ENCODE measurements at regions of chr3 and their contacts with region 1.

Region 1: DNA sequence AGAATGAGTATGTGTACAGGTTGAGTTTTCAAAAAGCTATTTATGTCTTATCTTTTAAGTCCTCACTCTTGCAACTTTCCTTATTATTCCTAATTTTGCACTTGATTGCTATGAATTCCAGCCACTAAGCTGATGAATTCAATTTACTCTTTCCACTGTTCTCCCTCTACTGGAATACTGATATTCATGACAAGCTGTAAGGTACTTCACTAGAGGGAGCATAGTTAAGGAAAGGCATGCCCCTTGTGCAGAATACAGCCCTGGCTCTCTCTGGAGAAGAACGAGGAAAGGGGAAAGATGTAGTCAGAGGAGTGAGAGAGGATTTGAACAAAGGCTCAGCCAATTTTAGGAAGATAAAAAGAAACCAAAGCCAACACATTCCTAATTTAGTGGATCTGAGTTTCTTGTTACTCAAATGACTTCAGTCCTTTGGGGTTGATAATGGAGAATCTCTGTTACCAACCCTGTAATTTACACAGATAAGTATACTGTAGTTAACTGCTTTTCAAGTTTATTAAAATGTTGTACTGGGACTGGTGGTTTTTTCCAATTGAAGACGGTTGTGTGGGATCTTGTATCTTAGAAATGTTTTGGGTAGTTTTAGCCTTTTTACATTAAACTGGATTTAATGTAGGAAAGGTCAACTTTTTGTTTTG is 4.0 kb downstream of the SCAANT1 start:
- DNase-seq: no peak
- H3K4me3 ChIP-seq: no peak overlapping the region
- CTCF ChIP-seq: no peak
- POLR2A ChIP-seq: no peak

Region 2: DNA sequence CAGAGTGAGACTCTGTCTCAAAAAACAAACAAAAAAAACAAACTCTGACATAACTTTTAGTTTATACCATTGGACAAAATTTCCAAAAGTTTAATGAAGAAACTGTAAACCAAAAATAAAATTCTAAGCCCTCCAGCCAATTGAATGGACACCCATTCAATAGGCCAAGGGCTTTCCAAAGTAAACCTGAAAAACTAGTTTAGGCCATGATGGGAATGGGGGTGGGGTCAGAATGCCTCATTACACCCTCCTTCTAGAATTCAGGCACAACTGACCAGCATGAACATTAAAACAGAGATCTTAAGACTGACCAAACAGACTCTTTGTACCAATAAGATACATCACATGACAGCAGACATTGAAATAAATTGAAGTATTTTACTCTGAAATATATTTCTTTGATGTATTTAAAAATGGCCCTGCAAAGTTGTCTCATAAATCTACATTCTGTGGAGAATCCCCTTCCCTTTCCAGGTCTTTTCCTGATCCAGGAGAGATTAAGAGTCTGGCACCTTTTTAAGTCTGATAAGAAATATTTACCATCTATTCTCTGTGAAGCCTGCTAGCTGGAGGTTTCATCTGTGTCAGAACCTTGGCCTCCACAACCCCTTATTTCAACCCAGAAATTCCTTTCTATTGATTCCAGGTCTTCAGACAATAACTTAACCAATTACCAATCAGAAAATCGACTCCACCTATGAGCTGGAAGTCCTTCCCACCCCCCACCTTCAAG is 60.3 kb before region 1 on chr3:
- intact Hi-C with region 1: no loop called
- DNase-seq: no peak
- H3K4me3 ChIP-seq: no peak overlapping the region
- CTCF ChIP-seq: no peak
- POLR2A ChIP-seq: no peak

Region 3: DNA sequence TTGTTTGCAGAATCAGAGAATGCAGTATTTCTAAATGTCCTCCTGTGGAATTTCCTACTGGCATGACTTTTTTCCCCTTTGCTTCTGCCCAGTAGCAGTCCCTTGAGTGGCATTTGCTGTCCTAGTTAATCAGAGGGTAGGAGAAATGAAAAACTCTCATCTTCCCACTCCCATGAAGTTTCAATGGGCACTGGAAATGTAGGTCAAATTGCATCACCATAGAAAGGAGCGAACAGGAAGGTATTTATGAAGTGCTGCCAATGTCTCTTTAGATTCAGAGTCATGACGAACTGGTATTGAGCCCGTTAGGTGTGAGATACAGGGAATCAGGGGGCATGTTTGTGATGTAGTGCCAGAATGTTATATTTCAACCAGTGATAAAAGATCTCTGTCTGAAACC is 21.4 kb before region 1 on chr3:
- intact Hi-C with region 1: loop called (anchors 1 kb)
- DNase-seq: no peak
- H3K4me3 ChIP-seq: no peak overlapping the region
- CTCF ChIP-seq: no peak
- POLR2A ChIP-seq: no peak